Heart right ventricle (tissue), 16 donors: ENCODE measurements at regions of chr5 and their contacts with region 1.

Region 1: GRCh38 chr5:65481635-65482295 is at the start of gene ADAMTS6:
- DNase-seq: peak; percentile 87 to 95
- ATAC-seq: peak; percentile 93 to 97 (median 96)
- H3K4me3 ChIP-seq: peak within 1 kb of the TSS; percentile 44 to 73 (median 60)
- H3K27ac ChIP-seq: peak within 1 kb of the TSS; percentile 55 to 95 (median 88)
- H3K4me1 ChIP-seq: peaks cover 0 to 23% (median 14%) of the 10 kb centered on the region in 9 donors
- H3K27me3 ChIP-seq: no peaks in the 10 kb centered on the region
- CTCF ChIP-seq: no peak
- total RNA-seq, gene ADAMTS6: 0.85 to 4.1 (median 2.7) TPM

Region 2: DNA sequence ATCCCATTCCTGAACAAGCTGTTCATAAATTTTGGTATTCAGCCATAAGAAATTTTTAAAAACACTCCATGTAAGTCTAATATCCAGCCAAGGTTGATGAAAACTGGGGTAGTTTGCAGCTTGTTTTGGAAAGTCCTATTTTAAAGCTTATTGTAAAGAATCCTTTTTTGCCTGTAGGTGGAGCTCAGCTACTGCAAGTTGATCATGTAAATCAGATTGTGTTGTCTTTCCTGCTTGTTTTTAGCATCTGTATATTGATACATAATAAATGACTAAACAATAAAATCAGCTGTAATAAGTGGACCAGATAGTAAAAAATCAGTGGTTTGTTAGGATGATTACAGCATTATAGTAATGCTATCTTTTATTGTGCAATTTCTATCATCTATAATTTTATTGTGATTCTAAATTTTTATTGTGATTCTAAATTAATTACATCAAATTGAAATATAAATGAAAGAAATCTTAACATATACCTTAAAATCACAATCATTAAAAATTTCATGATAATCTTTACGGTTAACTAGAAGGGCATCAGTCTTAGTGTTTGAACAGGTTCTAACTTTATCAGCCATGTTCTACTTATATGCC is 670.6 kb before region 1 on chr5:
- intact Hi-C with region 1: loop called (anchors 1 to 10 kb)
- DNase-seq: peak in 1 of 2 donors; percentile 11
- ATAC-seq: peak in 4 of 8 donors; percentile 28 to 61 (median 35)
- H3K4me3 ChIP-seq: no peak overlapping the region
- H3K27ac ChIP-seq: no peak overlapping the region
- H3K4me1 ChIP-seq: peaks cover 0 to 18% (median 5%) of the 10 kb centered on the region in 9 donors
- H3K27me3 ChIP-seq: no peaks in the 10 kb centered on the region
- CTCF ChIP-seq: peak; percentile 52 to 85 (median 74)

Region 3: DNA sequence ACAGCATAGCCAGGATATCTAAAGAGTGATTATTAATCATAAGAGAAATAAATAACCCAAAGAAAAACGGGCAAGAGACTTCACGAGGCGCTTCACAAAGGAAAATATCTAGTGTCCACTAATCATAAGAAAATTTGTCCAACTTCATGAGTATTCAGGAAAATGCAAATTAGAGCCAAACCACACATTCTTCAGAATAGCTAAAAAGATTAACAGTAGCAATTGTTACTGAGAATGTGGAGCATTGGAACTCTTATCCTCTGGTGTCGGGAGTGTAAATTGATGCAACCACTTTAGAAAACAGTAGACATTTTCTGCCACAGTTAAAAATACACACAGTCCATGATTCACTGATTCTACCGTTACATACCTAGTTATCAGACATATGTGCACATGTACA is 567.4 kb before region 1 on chr5:
- intact Hi-C with region 1: no loop called
- DNase-seq: no peak
- ATAC-seq: no peak
- H3K4me3 ChIP-seq: no peak overlapping the region
- H3K27ac ChIP-seq: no peak overlapping the region
- H3K4me1 ChIP-seq: no peaks in the 10 kb centered on the region
- H3K27me3 ChIP-seq: no peaks in the 10 kb centered on the region
- CTCF ChIP-seq: no peak

Region 4: DNA sequence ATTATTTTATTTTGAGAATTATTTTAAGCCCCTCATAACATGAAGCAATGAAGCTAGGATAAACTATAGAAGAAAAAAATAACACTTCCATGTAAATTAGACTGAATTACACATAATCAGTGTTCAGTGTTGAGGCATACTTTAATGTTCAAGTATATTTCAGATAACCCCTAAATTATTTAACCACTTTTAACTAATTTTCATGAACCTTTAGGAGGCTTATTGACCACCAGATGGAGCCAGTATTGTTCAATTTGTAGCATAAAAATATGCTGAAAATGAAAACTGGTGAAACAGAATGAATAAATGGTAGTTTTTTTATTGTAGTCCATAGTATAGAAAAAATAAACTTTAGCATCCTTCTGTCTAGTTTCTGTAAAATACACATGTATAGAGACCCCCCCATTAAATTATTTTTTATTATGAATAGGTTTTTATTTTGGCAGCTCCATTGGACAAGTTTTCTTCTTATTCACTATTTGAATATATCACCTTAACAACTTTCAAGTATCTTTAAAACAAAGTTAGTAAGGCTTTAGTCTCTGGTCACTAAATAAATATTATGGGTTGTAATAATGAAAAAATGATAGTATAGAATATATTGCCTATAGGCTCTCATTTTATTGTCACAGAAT is 522.9 kb before region 1 on chr5:
- intact Hi-C with region 1: loop called (anchors 2 to 10 kb)
- DNase-seq: no peak
- ATAC-seq: no peak
- H3K4me3 ChIP-seq: no peak overlapping the region
- H3K27ac ChIP-seq: no peak overlapping the region
- H3K4me1 ChIP-seq: no peaks in the 10 kb centered on the region
- H3K27me3 ChIP-seq: no peaks in the 10 kb centered on the region
- CTCF ChIP-seq: peak; percentile 13 to 78 (median 57)

Region 5: GRCh38 chr5:64971513-64971912 is 510.3 kb before region 1 on chr5:
- intact Hi-C with region 1: loop called in 3 of 10 experiments (anchors 5 to 10 kb)
- DNase-seq: no peak
- ATAC-seq: no peak
- H3K4me3 ChIP-seq: no peak overlapping the region
- H3K27ac ChIP-seq: no peak overlapping the region
- H3K4me1 ChIP-seq: peaks cover 0 to 22% (median 6%) of the 10 kb centered on the region in 9 donors
- H3K27me3 ChIP-seq: no peaks in the 10 kb centered on the region
- CTCF ChIP-seq: peak in 5 of 9 donors; percentile 37 to 53 (median 40)

Region 6: GRCh38 chr5:65035211-65036206 is 446.3 kb before region 1 on chr5:
- intact Hi-C with region 1: loop called in 3 of 10 experiments (anchors 5 kb)
- DNase-seq: peak; percentile 90 to 91
- ATAC-seq: peak; percentile 94 to 97 (median 95)
- H3K4me3 ChIP-seq: peak overlapping the region; percentile 41 to 82 (median 70)
- H3K27ac ChIP-seq: peak overlapping the region; percentile 79 to 99 (median 96)
- H3K4me1 ChIP-seq: peaks cover 18 to 55% (median 39%) of the 10 kb centered on the region in 9 donors
- H3K27me3 ChIP-seq: no peaks in the 10 kb centered on the region
- CTCF ChIP-seq: peak in 2 of 9 donors; percentile 8 to 16

Region 7: GRCh38 chr5:65213921-65214525 is 267.7 kb before region 1 on chr5:
- intact Hi-C with region 1: loop called in 3 of 10 experiments (anchors 10 kb)
- DNase-seq: no peak
- ATAC-seq: peak in 2 of 8 donors; percentile 35 to 45
- H3K4me3 ChIP-seq: no peak overlapping the region
- H3K27ac ChIP-seq: no peak overlapping the region
- H3K4me1 ChIP-seq: no peaks in the 10 kb centered on the region
- H3K27me3 ChIP-seq: no peaks in the 10 kb centered on the region
- CTCF ChIP-seq: peak in 8 of 9 donors; percentile 24 to 62 (median 50)